HepG2 (cell line): ENCODE measurements at regions of chr4 and their contacts with region 1.

Region 1: GRCh38 chr4:128809477-128810330 is at the start of gene JADE1:
- DNase-seq: peak; percentile 91
- ATAC-seq: peak; percentile 73
- H3K4me3 ChIP-seq: peak within 1 kb of the TSS; percentile 82 to 99 (median 84)
- H3K27ac ChIP-seq: peak within 1 kb of the TSS; percentile 99
- H3K4me1 ChIP-seq: peaks cover 18% of the 10 kb centered on the region
- H3K27me3 ChIP-seq: no peaks in the 10 kb centered on the region; a peak in 1 of 5 replicates
- CTCF ChIP-seq: peak; percentile 92
- EP300 ChIP-seq: 0 out of 4 replicates have a peak, but pooled peaks of 1 of the 2 experiments have one; percentile 21
- POLR2A ChIP-seq: peak; percentile 45 to 52; a peak in 2 of 4 replicates
- RAD21 ChIP-seq: peak; percentile 87
- total RNA-seq, gene JADE1: 19.3 and 23.4 TPM in 2 replicates

Region 2: GRCh38 chr4:128287871-128288688 is 521.6 kb before region 1 on chr4:
- CTCF ChIA-PET with region 1: no interaction called
- POLR2A ChIA-PET with region 1: interaction called, 5 read pairs
- in situ Hi-C with region 1: no loop called
- intact Hi-C with region 1: loop called (anchors 5 kb)
- DNase-seq: peak; percentile 96
- ATAC-seq: peak; percentile 85
- H3K4me3 ChIP-seq: peak overlapping the region; percentile 94 to 98 (median 95)
- H3K27ac ChIP-seq: peak overlapping the region; percentile 77
- H3K4me1 ChIP-seq: peaks cover 34% of the 10 kb centered on the region
- H3K27me3 ChIP-seq: peaks cover 2 to 5% of the 10 kb centered on the region in 2 experiments; a peak in 3 of 5 replicates
- CTCF ChIP-seq: peak; percentile 51
- EP300 ChIP-seq: peak in 1 of 2 experiments; percentile 37; a peak in 1 of 4 replicates
- POLR2A ChIP-seq: peak; percentile 53 to 88; a peak in 2 of 4 replicates
- RAD21 ChIP-seq: peak; percentile 66

Region 3: DNA sequence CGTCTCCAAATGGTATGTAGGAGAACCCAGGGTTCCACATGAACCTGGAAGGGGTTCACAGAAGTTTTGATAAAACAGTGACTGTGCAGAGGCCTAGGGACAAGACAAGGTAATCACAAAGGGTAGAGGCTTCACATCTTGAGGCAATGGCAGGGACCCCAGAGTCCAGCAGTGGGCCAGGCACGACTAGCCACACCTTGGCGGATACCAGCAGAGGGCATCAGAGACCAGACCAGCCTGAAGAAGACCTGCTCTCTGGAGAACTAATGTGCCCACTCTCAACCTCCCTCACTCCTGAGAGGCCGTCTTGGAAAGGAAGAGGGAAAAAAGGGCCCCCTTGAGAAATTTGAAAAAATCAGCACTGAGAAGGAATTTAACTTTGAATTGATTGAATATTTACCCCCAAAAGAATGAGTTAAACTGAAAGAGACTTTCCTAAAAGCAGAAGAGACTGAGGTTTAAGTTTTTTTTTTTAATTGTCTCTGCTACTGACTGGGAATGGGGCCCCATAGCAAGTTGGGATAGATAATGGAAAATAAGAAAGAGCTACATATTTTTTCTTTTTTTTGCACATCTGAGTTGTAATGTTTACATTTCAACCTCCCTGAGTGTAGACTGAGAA is 244.0 kb before region 1 on chr4:
- CTCF ChIA-PET with region 1: interaction called, 8 read pairs
- POLR2A ChIA-PET with region 1: no interaction called
- in situ Hi-C with region 1: loop called (anchors 25 kb)
- intact Hi-C with region 1: loop called (anchors 2 kb)
- DNase-seq: peak; percentile 51
- ATAC-seq: peak; percentile 99
- H3K4me3 ChIP-seq: no peak overlapping the region
- H3K27ac ChIP-seq: no peak overlapping the region
- H3K4me1 ChIP-seq: peaks cover 8% of the 10 kb centered on the region; the same call in 1 of the 2 replicates
- H3K27me3 ChIP-seq: no peaks in the 10 kb centered on the region; a peak in 1 of 5 replicates
- CTCF ChIP-seq: peak; percentile 82
- EP300 ChIP-seq: no peak
- POLR2A ChIP-seq: no peak
- RAD21 ChIP-seq: peak; percentile 82

Region 4: GRCh38 chr4:128600996-128601871 is 208.5 kb before region 1 on chr4:
- CTCF ChIA-PET with region 1: no interaction called
- POLR2A ChIA-PET with region 1: interaction called, 15 read pairs
- in situ Hi-C with region 1: no loop called
- intact Hi-C with region 1: loop called (anchors 1 kb)
- DNase-seq: peak; percentile 93
- ATAC-seq: peak; percentile 95
- H3K4me3 ChIP-seq: peak overlapping the region; percentile 48 to 70 (median 55)
- H3K27ac ChIP-seq: peak overlapping the region; percentile 63
- H3K4me1 ChIP-seq: peaks cover 41% of the 10 kb centered on the region
- H3K27me3 ChIP-seq: no peaks in the 10 kb centered on the region
- CTCF ChIP-seq: 0 out of 2 replicates have a peak, but pooled peaks have one; percentile 1
- EP300 ChIP-seq: peak in 1 of 2 experiments; percentile 52; a peak in 2 of 4 replicates
- POLR2A ChIP-seq: peak in 1 of 2 experiments; percentile 42; a peak in 1 of 4 replicates
- RAD21 ChIP-seq: no peak

Region 5: DNA sequence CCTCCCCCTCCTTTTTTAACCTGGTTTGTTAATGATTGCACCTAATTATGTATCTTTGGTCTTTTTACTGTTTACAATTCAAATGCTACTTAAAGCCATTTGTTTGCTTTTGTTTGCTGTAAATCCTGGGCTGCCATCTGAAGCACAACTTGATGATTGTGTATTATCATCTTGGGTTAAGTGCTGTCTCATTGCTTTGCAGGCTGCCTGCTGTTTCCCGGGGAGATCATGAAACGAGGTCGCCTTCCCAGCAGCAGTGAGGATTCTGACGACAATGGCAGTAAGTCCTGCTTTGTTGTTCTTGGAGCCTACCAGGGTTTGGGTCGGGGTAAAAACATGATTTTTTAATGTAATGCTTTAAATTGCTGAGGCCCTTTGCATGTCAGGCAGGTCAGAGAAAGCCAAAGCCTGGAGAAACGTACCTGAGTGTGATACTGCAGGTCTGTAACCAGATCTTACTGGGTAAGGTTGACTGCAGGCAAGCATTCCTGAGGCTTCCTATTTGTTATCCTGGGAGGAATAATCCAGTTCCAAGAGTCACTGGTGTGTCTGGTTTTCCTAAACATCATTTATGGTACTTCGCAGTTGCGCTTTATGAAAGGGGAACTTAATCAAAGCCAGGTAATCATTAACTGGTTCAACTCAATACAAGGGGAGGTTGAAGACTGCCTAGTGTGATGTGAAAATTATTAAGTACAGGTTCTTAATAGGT is 22.0 kb after region 1 on chr4:
- CTCF ChIA-PET with region 1: no interaction called
- POLR2A ChIA-PET with region 1: interaction called, 10 read pairs
- in situ Hi-C with region 1: no loop called
- intact Hi-C with region 1: loop called (anchors 1 kb)
- DNase-seq: peak; percentile 57
- ATAC-seq: peak; percentile 79
- H3K4me3 ChIP-seq: peak overlapping the region in 2 of 3 experiments; percentile 2 to 18; a peak in 2 of 6 replicates
- H3K27ac ChIP-seq: peak overlapping the region; percentile 66
- H3K4me1 ChIP-seq: peaks cover 50% of the 10 kb centered on the region
- H3K27me3 ChIP-seq: no peaks in the 10 kb centered on the region
- CTCF ChIP-seq: no peak
- EP300 ChIP-seq: peak in 1 of 2 experiments; percentile 18; a peak in 1 of 4 replicates
- POLR2A ChIP-seq: no peak
- RAD21 ChIP-seq: no peak

Region 6: DNA sequence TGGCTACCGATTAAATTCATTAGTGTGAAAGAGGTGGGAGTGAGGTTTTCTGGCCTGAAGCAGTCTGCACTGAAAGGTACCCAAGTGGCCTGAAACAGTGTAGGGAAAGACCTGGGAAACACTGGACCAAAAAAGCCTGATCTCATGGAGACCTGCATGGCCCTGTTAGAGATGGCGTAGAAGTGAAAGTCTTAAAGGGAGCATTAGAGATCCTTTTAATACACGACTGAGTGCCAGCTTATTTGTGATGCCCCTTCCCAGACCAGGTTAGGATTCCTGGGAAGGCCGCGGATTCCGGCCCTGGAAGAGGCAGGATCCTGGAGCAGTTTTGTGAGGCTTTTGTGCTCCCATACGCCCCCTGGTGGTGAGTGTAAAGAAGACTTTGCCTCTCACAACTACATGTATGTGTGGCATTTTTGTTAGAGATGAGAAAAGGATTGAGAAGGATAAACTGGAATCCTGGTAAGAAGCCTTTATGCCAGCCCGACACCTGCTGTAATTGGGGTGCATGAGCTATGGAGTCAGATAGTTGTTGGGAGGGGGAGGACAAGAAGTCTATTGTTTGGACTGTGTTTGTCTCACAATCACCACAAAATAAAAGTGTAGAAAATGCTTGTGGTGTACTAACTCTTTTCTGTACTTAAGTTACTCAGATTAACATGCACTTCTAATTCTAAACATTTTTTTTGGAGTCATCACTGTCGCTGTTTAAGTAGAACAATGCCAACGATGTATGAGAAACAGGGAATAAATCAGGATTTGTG is 53.8 kb after region 1 on chr4:
- CTCF ChIA-PET with region 1: interaction called, 3 read pairs
- POLR2A ChIA-PET with region 1: no interaction called
- in situ Hi-C with region 1: loop called (anchors 5 kb)
- intact Hi-C with region 1: loop called (anchors 1 kb)
- DNase-seq: peak; percentile 69
- ATAC-seq: peak; percentile 85
- H3K4me3 ChIP-seq: no peak overlapping the region
- H3K27ac ChIP-seq: no peak overlapping the region
- H3K4me1 ChIP-seq: peaks cover 18% of the 10 kb centered on the region
- H3K27me3 ChIP-seq: no peaks in the 10 kb centered on the region
- CTCF ChIP-seq: peak; percentile 81
- EP300 ChIP-seq: no peak
- POLR2A ChIP-seq: no peak
- RAD21 ChIP-seq: peak; percentile 70